HCT116 (cell line): ENCODE measurements at regions of chr6 and their contacts with region 1.

Region 1: GRCh38 chr6:137641474-137642077 is 147.4 kb upstream of the OLIG3 start:
- DNase-seq: peak; percentile 72
- ATAC-seq: peak; percentile 94
- H3K4me3 ChIP-seq: no peak overlapping the region
- H3K27ac ChIP-seq: no peak overlapping the region
- H3K4me1 ChIP-seq: peaks cover 4 to 10% of the 10 kb centered on the region in 2 experiments; a peak in 3 of 4 replicates
- H3K27me3 ChIP-seq: no peaks in the 10 kb centered on the region
- CTCF ChIP-seq: peak; percentile 64 to 77 (median 74)
- POLR2A ChIP-seq: no peak
- RAD21 ChIP-seq: peak; percentile 89

Region 2: DNA sequence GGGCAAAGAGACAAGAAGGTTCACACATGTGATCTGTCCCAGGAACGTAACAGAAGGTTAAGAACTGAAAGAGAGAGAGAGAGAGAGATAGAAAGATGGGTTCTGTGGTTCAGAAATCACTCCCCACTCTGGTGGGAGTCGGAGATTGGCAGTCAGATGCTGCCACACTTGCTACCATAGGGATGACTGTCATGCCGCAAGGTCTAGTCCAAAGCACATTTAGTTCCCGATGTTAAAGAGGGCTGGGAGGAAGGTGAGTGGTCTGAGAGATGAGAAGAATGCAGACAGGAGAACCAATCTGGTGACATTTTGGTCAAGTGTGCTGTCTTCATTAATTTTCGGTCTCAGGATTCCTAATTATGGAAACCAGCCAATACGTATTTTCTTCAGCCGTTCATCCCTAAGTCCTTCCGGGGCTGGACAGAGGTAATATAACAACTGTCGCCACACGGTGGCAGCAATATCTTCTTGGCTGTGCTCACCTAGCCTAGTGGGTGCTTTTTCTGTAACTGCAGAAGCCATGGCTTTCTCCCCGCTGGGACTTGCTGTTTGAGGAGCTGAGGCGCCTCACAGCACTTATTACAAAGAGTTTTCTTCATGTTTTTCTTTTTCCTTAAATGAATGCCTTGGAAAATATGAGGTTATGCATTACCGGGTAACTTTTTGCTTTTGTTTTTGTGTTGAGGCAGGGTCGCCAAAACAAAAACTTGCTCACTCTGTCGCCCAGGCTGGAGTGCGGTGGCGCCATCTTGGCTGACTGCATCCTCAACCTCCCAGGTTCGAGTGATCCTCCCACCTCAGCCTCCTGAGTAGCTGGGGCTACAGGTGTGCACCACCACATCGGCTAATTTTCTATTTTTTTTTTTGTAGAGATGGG is 673.5 kb before region 1 on chr6:
- CTCF ChIA-PET with region 1: no interaction called
- POLR2A ChIA-PET with region 1: no interaction called
- RAD21 ChIA-PET with region 1: no interaction called
- intact Hi-C with region 1: loop called (anchors 5 kb)
- DNase-seq: peak; percentile 75
- ATAC-seq: peak; percentile 99
- H3K4me3 ChIP-seq: no peak overlapping the region; a peak in 1 of 4 replicates
- H3K27ac ChIP-seq: no peak overlapping the region
- H3K4me1 ChIP-seq: peaks cover 0 to 5% of the 10 kb centered on the region in 2 experiments; a peak in 2 of 4 replicates
- H3K27me3 ChIP-seq: no peaks in the 10 kb centered on the region
- CTCF ChIP-seq: peak; percentile 59 to 82 (median 76)
- POLR2A ChIP-seq: no peak
- RAD21 ChIP-seq: peak; percentile 87

Region 3: GRCh38 chr6:137076277-137077068 is 565.1 kb before region 1 on chr6:
- CTCF ChIA-PET with region 1: interaction called, 11 read pairs
- POLR2A ChIA-PET with region 1: interaction called, 3 read pairs
- RAD21 ChIA-PET with region 1: no interaction called
- intact Hi-C with region 1: loop called (anchors 1 kb)
- DNase-seq: peak; percentile 82
- ATAC-seq: peak; percentile 100
- H3K4me3 ChIP-seq: no peak overlapping the region
- H3K27ac ChIP-seq: no peak overlapping the region
- H3K4me1 ChIP-seq: no peaks in the 10 kb centered on the region
- H3K27me3 ChIP-seq: no peaks in the 10 kb centered on the region
- CTCF ChIP-seq: peak; percentile 73 to 94 (median 90)
- POLR2A ChIP-seq: no peak
- RAD21 ChIP-seq: peak; percentile 92

Region 4: DNA sequence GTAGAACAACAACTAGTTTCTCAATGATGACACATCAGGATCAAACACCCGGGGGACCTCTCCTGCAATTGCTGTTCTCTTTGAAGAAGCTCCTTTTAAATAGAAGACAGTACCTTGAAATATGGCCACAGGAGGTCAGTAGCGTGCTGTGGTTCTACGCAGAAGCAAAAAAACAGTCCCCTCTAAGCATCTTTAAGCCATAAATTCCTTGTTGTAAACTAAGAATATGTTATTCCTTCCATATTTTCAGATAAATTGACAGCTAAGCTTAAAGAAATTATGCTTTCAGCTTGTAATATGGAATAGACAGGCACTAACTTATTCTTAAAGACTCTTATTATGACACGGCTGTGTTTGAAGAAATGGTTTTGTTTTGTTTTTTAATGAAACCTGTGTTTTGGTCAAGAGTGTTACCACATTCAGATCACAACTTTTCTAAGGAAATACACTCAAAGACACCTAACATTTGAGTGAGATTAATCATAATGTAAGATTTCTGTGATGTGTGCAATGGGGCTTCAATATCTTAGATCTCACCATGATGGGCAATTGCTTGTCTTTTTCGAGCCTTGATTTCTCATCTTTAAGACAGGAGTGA is 547.1 kb before region 1 on chr6:
- CTCF ChIA-PET with region 1: interaction called, 15 read pairs
- POLR2A ChIA-PET with region 1: no interaction called
- RAD21 ChIA-PET with region 1: interaction called in 1 of 2 experiments, 3 read pairs
- intact Hi-C with region 1: loop called (anchors 1 kb)
- DNase-seq: peak; percentile 56
- ATAC-seq: peak; percentile 88
- H3K4me3 ChIP-seq: no peak overlapping the region
- H3K27ac ChIP-seq: no peak overlapping the region
- H3K4me1 ChIP-seq: peaks cover 0 to 3% of the 10 kb centered on the region in 2 experiments; a peak in 2 of 4 replicates
- H3K27me3 ChIP-seq: no peaks in the 10 kb centered on the region
- CTCF ChIP-seq: peak; percentile 62 to 87 (median 84)
- POLR2A ChIP-seq: no peak
- RAD21 ChIP-seq: peak; percentile 87

Region 5: DNA sequence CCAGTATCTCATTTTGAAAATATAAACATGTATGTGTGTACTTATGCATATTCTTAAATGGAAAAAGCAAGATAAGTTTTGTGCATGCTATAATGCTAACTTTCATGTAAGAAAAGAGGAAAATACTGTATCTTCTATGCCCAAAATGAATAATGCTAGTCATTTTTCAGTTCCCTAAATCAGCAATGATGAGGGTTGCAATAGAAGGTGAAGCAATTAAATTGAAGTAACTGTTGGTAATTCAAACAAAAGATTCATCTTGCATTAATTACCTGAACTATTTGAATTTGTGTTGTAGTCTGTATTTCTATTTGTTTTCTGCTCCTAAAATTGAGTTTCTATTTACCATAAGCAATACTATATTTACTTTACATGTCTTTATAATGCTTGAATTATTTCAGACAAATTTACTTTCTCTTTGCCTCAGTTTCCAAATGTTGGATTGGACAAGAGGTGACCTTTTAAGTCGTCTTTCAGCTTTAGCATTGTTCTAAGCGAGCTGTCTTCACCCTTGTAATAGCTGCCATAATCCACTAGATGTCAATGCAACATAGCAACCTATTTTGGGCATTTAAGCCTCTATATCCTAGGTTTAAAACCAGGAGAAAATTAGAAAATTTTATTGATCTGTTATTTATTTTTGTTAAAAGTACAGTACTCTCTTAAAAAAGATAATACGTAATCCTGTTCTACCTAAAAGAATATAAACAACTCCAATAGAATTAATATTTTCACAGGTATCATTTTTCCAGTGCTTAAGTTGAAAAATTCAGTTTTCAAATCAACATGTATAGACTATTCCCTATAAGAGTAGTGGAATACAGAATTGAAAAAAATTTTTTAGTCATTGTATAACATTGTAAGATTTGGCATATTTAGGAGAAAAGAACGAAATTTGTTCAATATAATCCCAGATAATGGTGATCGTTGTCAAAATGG is 370.1 kb before region 1 on chr6:
- CTCF ChIA-PET with region 1: interaction called, 10 read pairs
- POLR2A ChIA-PET with region 1: no interaction called
- RAD21 ChIA-PET with region 1: no interaction called
- intact Hi-C with region 1: loop called (anchors 1 kb)
- DNase-seq: peak; percentile 65
- ATAC-seq: peak; percentile 84
- H3K4me3 ChIP-seq: no peak overlapping the region
- H3K27ac ChIP-seq: no peak overlapping the region
- H3K4me1 ChIP-seq: no peaks in the 10 kb centered on the region
- H3K27me3 ChIP-seq: no peaks in the 10 kb centered on the region
- CTCF ChIP-seq: peak; percentile 82 to 90 (median 85); a peak in 5 of 6 replicates
- POLR2A ChIP-seq: no peak
- RAD21 ChIP-seq: peak; percentile 87

Region 6: GRCh38 chr6:137341681-137342195 is 299.8 kb before region 1 on chr6:
- CTCF ChIA-PET with region 1: interaction called, 3 read pairs
- POLR2A ChIA-PET with region 1: no interaction called
- RAD21 ChIA-PET with region 1: no interaction called
- intact Hi-C with region 1: loop called (anchors 1 kb)
- DNase-seq: no peak
- ATAC-seq: no peak
- H3K4me3 ChIP-seq: no peak overlapping the region
- H3K27ac ChIP-seq: no peak overlapping the region
- H3K4me1 ChIP-seq: no peaks in the 10 kb centered on the region
- H3K27me3 ChIP-seq: no peaks in the 10 kb centered on the region
- CTCF ChIP-seq: peak; percentile 25 to 39 (median 37); a peak in 4 of 6 replicates
- POLR2A ChIP-seq: no peak
- RAD21 ChIP-seq: peak; percentile 59